PC-3 (cell line): ENCODE measurements at regions of chr7 and their contacts with region 1.

Region 1: GRCh38 chr7:112819536-112819935 is 29.3 kb upstream of the TMEM168 start:
- DNase-seq: no peak
- ATAC-seq: no peak
- H3K4me3 ChIP-seq: no peak overlapping the region
- H3K27ac ChIP-seq: no peak overlapping the region
- H3K4me1 ChIP-seq: no peaks in the 10 kb centered on the region
- H3K27me3 ChIP-seq: no peaks in the 10 kb centered on the region
- CTCF ChIP-seq: no peak

Region 2: GRCh38 chr7:112833082-112833481 is 13.5 kb after region 1 on chr7:
- CTCF ChIA-PET with region 1: no interaction called
- POLR2A ChIA-PET with region 1: interaction called, 32 read pairs
- intact Hi-C with region 1: no loop called
- DNase-seq: no peak
- ATAC-seq: no peak
- H3K4me3 ChIP-seq: no peak overlapping the region
- H3K27ac ChIP-seq: no peak overlapping the region
- H3K4me1 ChIP-seq: no peaks in the 10 kb centered on the region
- H3K27me3 ChIP-seq: no peaks in the 10 kb centered on the region
- CTCF ChIP-seq: no peak